K562 (cell line): ENCODE measurements at regions of chr6 and their contacts with region 1.

Region 1: DNA sequence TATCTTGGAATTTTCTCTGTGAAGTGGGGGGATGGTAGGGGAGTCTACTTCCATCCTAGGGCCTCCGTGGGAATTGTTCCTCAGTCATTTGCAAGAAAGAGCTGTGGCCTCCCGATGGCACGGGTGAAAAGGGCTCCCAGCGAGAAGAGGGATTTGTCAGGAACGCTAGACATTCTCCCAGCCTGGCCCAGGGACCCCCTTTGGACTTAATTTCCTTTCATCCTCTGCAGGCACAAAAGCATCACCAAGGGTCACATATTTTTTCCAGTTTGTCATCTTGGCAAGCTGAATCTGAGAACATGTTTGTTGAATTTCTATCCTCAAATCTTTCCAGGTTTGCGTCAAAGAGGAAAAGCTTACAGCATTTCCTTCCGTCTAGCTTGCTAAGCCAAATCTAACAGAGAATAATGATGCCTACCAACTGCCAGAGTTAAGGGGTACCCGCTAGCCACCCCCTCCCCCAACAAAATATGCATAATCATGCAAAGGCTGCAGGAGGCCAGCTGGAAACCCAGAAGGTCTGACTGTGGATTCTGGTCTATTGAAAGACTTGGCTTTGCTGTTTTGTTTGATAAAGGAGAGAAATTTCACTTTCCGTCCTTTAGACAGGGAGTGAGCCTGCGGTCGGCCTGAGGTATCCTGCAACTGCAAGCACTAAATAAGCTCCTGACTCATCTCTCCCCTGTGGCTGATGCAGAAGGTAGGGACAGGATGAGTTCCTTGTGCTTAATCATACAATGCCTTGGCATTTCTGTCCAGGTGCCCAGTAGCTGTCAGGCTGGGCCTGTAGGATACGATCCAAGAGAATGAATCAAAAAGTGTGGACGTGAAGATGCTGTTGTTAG is 23.1 kb downstream of the PSMG4 start:
- DNase-seq: no peak
- ATAC-seq: no peak
- H3K4me3 ChIP-seq: no peak overlapping the region
- H3K27ac ChIP-seq: no peak overlapping the region
- H3K4me1 ChIP-seq: peaks cover 0 to 30% of the 10 kb centered on the region in 2 experiments; a peak in 2 of 5 replicates
- H3K27me3 ChIP-seq: no peaks in the 10 kb centered on the region
- CTCF ChIP-seq: no peak
- EP300 ChIP-seq: no peak
- POLR2A ChIP-seq: no peak
- RAD21 ChIP-seq: no peak

Region 2: DNA sequence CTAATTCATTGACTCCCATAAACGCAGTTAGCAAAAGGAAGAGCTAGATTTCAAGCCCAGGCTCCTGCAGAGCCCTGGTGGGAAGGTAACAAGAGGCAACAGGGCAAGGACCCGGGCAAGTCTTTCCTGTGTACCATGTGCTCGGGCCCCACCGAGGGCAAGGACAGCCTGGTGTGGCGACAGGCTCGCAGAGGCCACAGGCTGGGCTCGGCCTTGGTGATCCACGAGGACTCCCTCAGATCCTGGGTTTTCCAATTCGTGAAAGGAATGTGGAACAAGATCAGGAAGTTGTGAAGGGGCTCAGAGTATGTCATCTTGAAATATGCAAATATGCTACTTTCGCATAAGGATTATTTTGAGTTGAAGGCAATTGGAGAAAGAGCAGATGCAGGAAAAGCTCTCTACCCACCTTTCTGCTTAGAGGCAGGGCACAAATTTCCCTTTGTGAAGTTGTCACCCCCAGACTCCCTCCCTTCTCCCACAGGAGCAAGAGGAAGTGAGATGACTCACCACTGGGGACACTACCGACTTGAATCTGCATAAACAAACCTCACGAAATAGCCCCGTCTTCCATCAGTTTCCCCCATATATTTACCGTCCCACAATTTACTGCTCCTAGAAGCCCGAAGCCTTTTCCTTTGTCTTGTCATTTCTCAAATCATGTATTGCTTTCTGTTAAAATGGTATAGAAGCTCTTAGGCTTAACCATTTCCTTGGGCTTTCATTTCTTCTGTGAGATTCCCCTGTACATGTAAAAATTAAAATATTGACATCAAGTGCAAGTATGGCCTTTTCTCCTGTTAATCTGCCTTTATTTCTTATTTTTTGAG is 55.9 kb after region 1 on chr6:
- CTCF ChIA-PET with region 1: no interaction called
- POLR2A ChIA-PET with region 1: no interaction called
- in situ Hi-C with region 1: no loop called
- intact Hi-C with region 1: loop called (anchors 5 kb)
- DNase-seq: peak; percentile 77 to 86 (median 82)
- ATAC-seq: peak; percentile 82
- H3K4me3 ChIP-seq: no peak overlapping the region
- H3K27ac ChIP-seq: peak overlapping the region; percentile 71
- H3K4me1 ChIP-seq: peaks cover 10 to 41% of the 10 kb centered on the region in 2 experiments
- H3K27me3 ChIP-seq: no peaks in the 10 kb centered on the region
- CTCF ChIP-seq: peak; percentile 22 to 58 (median 54); a peak in 5 of 6 replicates
- EP300 ChIP-seq: peak; percentile 52; the same call in 1 of the 2 replicates
- POLR2A ChIP-seq: no peak
- RAD21 ChIP-seq: peak in 1 of 2 experiments; percentile 6; a peak in 2 of 4 replicates

Region 3: GRCh38 chr6:3510178-3510976 is 228.5 kb after region 1 on chr6:
- CTCF ChIA-PET with region 1: interaction called, 9 read pairs
- POLR2A ChIA-PET with region 1: no interaction called
- in situ Hi-C with region 1: no loop called
- intact Hi-C with region 1: loop called (anchors 2 kb)
- DNase-seq: no peak
- ATAC-seq: 0 out of 3 replicates have a peak, but pooled peaks have one; percentile 6
- H3K4me3 ChIP-seq: no peak overlapping the region
- H3K27ac ChIP-seq: no peak overlapping the region
- H3K4me1 ChIP-seq: peaks cover 9% of the 10 kb centered on the region in 2 experiments; a peak in 4 of 5 replicates
- H3K27me3 ChIP-seq: peaks cover 25 to 62% of the 10 kb centered on the region in 2 experiments
- CTCF ChIP-seq: no peak
- EP300 ChIP-seq: no peak
- POLR2A ChIP-seq: no peak
- RAD21 ChIP-seq: no peak

Region 4: DNA sequence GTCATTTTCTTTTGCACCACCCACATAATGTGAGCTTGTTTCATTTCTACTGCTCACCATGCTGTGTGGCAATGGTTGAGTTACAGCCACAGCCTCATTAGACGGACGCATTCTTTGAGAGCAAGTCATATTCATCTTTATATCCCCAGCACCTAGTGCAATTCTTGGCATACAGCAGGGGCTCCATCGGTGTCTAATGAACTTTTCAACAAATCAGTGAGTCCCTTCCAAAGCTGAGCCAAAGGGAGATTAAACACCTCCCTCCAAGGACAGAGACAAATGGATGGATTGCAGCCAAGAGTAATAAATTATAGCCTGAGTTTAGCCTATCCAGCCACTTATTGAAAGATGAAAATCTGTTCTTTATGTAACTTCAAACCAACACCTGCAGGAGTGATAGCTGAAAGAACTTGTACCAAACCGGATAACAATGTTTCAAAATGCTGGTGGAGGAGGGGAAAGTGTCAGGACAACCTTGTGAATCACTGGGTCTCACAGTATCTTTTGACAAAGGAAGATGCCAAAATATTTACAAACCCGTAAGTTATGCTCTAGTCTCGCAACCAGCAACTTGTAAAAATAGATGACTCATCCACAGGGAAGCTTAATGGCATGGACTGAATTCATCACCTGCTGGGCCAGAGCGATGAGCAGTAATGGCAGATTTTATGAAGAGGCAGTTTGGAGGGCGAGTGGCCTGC is 330.6 kb after region 1 on chr6:
- CTCF ChIA-PET with region 1: no interaction called
- POLR2A ChIA-PET with region 1: no interaction called
- in situ Hi-C with region 1: no loop called
- intact Hi-C with region 1: loop called (anchors 10 kb)
- DNase-seq: no peak
- ATAC-seq: no peak
- H3K4me3 ChIP-seq: no peak overlapping the region
- H3K27ac ChIP-seq: no peak overlapping the region
- H3K4me1 ChIP-seq: no peaks in the 10 kb centered on the region
- H3K27me3 ChIP-seq: peaks cover 60 to 77% of the 10 kb centered on the region in 2 experiments
- CTCF ChIP-seq: no peak
- EP300 ChIP-seq: no peak
- POLR2A ChIP-seq: no peak
- RAD21 ChIP-seq: no peak

Region 5: GRCh38 chr6:3664625-3665041 is 382.8 kb after region 1 on chr6:
- CTCF ChIA-PET with region 1: no interaction called
- POLR2A ChIA-PET with region 1: no interaction called
- in situ Hi-C with region 1: no loop called
- intact Hi-C with region 1: no loop called
- DNase-seq: no peak
- ATAC-seq: no peak
- H3K4me3 ChIP-seq: no peak overlapping the region
- H3K27ac ChIP-seq: no peak overlapping the region
- H3K4me1 ChIP-seq: no peaks in the 10 kb centered on the region; a peak in 1 of 5 replicates
- H3K27me3 ChIP-seq: peaks cover 47 to 59% of the 10 kb centered on the region in 2 experiments
- CTCF ChIP-seq: no peak
- EP300 ChIP-seq: no peak
- POLR2A ChIP-seq: no peak
- RAD21 ChIP-seq: no peak

Region 6: GRCh38 chr6:3977875-3978711 is 696.2 kb after region 1 on chr6:
- CTCF ChIA-PET with region 1: no interaction called
- POLR2A ChIA-PET with region 1: no interaction called
- in situ Hi-C with region 1: no loop called
- intact Hi-C with region 1: loop called (anchors 10 kb)
- DNase-seq: peak; percentile 46 to 74 (median 50)
- ATAC-seq: peak; percentile 100
- H3K4me3 ChIP-seq: no peak overlapping the region
- H3K27ac ChIP-seq: no peak overlapping the region
- H3K4me1 ChIP-seq: no peaks in the 10 kb centered on the region
- H3K27me3 ChIP-seq: peaks cover 14 to 19% of the 10 kb centered on the region in 2 experiments
- CTCF ChIP-seq: peak; percentile 72 to 88 (median 83)
- EP300 ChIP-seq: no peak
- POLR2A ChIP-seq: no peak
- RAD21 ChIP-seq: peak; percentile 61 to 82

Region 7: DNA sequence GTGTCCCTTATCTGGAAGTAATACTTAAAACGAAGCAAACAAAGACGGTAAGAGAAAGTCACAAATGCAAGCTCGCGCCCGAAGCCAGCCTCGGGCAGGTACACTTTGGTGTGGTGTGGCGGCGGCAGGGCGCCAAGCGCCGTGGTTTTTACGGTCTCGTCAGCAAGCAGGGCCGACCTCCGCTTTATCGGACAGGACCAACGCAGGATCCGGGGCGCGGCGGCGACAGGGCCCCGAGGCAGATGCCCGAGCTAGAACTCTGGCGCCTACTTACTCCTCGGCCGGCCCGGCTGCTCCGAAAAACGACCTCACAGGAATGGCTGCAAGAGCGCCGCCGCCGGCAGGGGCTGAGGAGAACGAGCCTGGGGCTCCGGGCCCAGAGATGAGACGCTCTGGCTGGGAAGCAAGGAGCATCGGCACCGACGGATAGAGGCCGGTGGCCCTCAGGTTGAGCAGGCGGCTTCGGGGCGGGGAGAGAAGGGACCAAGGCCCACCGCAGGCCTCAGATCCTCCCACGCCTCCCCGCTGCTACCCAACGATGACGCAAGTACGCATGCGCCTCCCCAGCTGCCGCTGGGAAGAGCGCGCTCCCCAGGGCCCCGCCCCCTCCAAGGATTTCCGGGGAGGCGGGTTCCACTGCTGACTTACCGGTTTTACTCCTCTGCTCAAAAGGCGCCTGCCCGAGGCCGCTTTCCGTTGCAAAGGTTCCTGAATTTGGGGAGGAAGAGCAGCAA is 736.5 kb after region 1 on chr6:
- CTCF ChIA-PET with region 1: no interaction called
- POLR2A ChIA-PET with region 1: interaction called, 3 read pairs
- in situ Hi-C with region 1: loop called (anchors 10 kb)
- intact Hi-C with region 1: no loop called
- DNase-seq: peak; percentile 95 to 100 (median 96)
- ATAC-seq: peak; percentile 68
- H3K4me3 ChIP-seq: peak overlapping the region; percentile 80
- H3K27ac ChIP-seq: peak overlapping the region; percentile 90
- H3K4me1 ChIP-seq: peaks cover 10 to 14% of the 10 kb centered on the region in 2 experiments
- H3K27me3 ChIP-seq: no peaks in the 10 kb centered on the region
- CTCF ChIP-seq: peak; percentile 27 to 60 (median 50); a peak in 5 of 6 replicates
- EP300 ChIP-seq: peak; percentile 35
- POLR2A ChIP-seq: peak; percentile 93
- RAD21 ChIP-seq: no peak